RWPE1 (cell line): ENCODE measurements at regions of chr17 and their contacts with region 1.

Region 1: DNA sequence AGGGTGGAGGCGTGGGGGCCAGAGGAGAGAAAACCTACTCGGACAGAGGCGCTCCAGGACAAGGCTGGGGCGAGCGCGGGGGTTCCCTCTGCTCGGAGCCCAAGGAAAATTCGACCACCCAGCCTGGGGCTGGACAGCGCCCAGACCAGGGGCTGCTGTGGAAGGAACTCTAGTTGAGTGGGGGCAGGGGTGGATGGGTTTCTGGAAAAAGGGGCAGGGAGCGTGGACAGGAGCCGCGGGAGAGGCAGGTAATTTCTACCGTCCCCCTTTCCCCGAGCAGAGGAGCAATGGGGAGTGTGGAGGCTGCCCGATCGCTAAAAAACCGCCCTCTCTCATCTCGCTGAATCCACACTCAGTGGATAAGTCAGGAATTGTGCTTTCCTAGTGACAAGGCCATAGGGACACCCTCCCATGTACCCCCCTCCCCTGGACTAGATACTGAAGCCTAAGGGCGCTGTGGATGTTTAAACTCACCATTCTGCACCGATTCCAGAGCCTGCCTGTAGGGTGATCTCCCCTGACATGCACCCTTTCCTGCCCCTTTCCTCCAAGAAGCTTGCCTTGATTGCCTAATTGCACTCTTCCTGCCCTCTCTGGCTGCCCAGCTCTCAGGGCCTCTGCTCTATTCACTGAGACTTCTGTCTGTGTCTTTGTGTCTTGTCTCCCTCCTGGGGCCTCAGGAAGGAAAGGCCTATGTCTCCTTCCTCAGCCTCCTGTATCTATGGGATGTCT is 90.7 kb upstream of the TMEM97 start:
- DNase-seq: no peak
- H3K27ac ChIP-seq: peak overlapping the region; percentile 59
- CTCF ChIP-seq: no peak

Region 2: GRCh38 chr17:28252436-28252835 is 24.1 kb after region 1 on chr17:
- CTCF ChIA-PET with region 1: interaction called, 12 read pairs
- POLR2A ChIA-PET with region 1: interaction called, 3 read pairs
- DNase-seq: peak; percentile 39
- H3K27ac ChIP-seq: no peak overlapping the region
- CTCF ChIP-seq: no peak